Activated CD8-positive, alpha-beta T cell treated with anti-CD3 and anti-CD28 coated beads, Interleukin-2, amount 10 ng/mL, durations not matched to agents 7 days and 5 days (primary cell): ENCODE measurements at regions of chr1 and their contacts with region 1.

Region 1: GRCh38 chr1:89483010-89483756 is 41.4 kb upstream of the LRRC8B start:
- DNase-seq: peak; percentile 91
- ATAC-seq: peak; percentile 80
- H3K4me3 Mint-ChIP-seq: no peak overlapping the region
- H3K27ac Mint-ChIP-seq: no peak overlapping the region
- H3K4me1 Mint-ChIP-seq: peaks cover 15% of the 10 kb centered on the region
- H3K27me3 Mint-ChIP-seq: peaks cover 2% of the 10 kb centered on the region

Region 2: DNA sequence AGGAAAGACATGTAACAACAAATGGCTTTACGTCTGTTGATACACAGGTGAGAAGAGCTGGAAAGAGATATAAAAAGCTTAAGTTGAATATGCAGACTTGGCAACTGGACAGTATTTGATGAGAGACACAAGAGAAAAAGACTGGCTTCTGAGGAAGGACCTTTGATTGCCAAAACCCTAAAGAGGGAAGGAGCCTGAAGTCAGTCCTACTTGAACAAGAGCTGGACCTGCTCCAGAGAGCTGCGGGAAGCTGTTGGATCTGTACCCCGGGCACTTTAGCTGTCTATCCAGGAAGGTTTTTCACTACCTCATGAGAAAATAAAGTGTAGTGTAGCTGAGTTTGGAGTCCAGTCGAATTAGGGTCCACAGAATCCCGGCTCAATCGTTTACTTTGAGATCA is 16.1 kb after region 1 on chr1:
- CTCF ChIA-PET with region 1: interaction called, 17 read pairs
- POLR2A ChIA-PET with region 1: no interaction called
- DNase-seq: no peak
- ATAC-seq: no peak
- H3K4me3 Mint-ChIP-seq: no peak overlapping the region
- H3K27ac Mint-ChIP-seq: no peak overlapping the region
- H3K4me1 Mint-ChIP-seq: no peaks in the 10 kb centered on the region
- H3K27me3 Mint-ChIP-seq: peaks cover 21% of the 10 kb centered on the region

Region 3: DNA sequence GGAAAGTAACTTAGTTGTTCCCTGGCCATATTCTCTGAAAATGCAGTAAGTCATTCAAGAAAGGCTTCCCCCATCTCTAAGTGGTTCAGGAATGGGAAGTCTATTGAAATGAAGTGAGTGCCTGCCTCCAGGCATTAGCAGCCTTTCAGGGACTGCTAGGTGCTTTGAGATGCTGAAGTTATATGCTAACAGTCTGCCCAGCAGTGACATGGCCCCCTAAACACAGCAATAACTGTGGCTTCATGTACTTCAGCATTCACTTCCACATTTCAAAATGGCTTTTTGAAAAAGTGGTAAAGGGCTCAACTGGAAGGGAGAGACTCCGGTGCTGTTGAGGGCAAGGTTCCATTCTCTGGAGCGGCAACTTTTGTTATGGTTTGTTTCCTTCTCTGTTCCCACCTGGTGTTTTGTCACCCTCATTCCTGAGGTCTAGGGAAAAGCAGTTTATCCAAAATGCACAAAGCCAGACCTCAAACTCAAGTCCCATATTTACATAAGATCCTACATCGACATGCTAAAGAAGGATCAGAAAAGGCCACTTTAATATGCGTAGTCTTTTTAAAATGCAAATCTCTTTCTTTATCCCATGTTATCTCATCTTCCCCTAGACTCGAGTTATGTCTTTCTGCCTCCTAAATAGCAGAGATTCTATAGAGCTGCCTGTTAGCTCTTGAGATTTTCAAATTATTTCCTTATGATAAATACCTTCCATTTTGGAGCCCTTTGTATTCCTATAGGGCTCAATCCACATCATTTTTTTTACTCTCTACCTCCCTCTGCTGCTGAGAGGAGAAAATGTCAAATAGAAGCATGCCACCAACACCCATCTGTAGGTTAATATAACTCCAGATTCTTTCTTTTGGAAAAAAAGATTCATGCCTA is 115.5 kb after region 1 on chr1:
- CTCF ChIA-PET with region 1: interaction called, 41 read pairs
- POLR2A ChIA-PET with region 1: no interaction called
- DNase-seq: no peak
- ATAC-seq: peak; percentile 63
- H3K4me3 Mint-ChIP-seq: no peak overlapping the region
- H3K27ac Mint-ChIP-seq: no peak overlapping the region
- H3K4me1 Mint-ChIP-seq: peaks cover 45% of the 10 kb centered on the region
- H3K27me3 Mint-ChIP-seq: no peaks in the 10 kb centered on the region

Region 4: DNA sequence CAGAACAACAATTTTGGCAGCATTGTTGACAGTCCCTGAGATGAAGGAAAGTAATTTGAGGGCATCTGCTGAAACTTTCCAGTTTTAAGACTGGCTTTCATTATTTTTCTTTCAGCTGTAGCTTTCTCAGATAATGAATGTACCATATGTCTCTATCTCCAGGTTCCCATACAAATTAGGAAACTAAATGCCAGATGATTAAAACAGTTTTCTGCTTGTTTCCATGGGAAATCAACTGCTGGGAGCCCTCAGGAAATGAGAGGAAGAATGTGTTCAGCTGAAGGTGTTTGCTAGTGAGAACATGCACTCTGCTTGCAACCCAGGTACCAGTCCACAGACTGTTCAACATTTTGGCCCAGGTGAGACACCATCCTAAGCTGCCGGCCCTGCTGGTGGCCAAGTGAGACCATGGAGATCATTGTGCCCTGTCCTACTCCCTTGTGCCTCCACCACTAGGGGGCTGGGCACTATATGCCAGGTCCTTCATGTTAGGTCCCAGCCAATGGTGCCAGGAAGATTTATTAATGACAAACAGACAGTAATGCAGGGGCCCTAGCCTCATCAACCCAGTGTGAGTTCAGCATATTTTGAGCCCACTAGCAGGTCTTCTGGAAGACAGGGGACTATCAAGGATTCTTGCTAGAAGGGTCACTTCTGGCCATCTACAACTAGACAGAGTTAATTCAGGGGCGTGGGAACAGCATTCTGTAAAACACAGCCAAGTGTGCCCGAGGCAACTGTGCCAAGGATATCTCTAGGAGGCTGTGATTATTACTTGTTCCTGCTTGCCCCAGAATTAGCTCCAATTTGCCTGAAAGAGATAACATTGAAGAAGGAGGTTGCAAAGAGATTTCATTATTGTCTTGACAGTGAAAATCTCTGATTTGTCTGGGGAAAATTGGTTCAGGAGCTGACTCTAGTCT is 132.8 kb after region 1 on chr1:
- CTCF ChIA-PET with region 1: interaction called, 12 read pairs
- POLR2A ChIA-PET with region 1: no interaction called
- DNase-seq: no peak
- ATAC-seq: no peak
- H3K4me3 Mint-ChIP-seq: no peak overlapping the region
- H3K27ac Mint-ChIP-seq: no peak overlapping the region
- H3K4me1 Mint-ChIP-seq: peaks cover 63% of the 10 kb centered on the region
- H3K27me3 Mint-ChIP-seq: no peaks in the 10 kb centered on the region

Region 5: DNA sequence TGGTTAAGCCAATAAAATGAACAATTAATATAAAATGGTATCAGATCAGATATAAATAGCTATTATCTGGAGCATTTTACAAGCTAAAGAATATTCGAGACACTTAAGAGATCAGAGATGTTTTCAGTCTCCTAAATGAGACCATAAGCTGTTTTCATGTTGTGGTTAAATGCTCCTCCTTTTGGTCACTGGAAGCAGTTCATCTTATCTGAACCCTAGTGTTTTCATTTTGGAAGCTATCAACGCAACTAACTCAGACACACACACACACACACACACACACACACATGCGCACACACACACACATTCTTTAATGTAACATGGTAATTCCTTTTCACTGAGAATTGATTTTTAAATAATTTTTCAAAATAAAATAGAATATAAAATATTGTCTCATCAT is 139.7 kb after region 1 on chr1:
- CTCF ChIA-PET with region 1: interaction called, 19 read pairs
- POLR2A ChIA-PET with region 1: no interaction called
- DNase-seq: peak; percentile 19
- ATAC-seq: no peak
- H3K4me3 Mint-ChIP-seq: no peak overlapping the region
- H3K27ac Mint-ChIP-seq: no peak overlapping the region
- H3K4me1 Mint-ChIP-seq: peaks cover 46% of the 10 kb centered on the region
- H3K27me3 Mint-ChIP-seq: no peaks in the 10 kb centered on the region